AG04449 (cell line): ENCODE measurements at regions of chr12 and their contacts with region 1.

Region 1: DNA sequence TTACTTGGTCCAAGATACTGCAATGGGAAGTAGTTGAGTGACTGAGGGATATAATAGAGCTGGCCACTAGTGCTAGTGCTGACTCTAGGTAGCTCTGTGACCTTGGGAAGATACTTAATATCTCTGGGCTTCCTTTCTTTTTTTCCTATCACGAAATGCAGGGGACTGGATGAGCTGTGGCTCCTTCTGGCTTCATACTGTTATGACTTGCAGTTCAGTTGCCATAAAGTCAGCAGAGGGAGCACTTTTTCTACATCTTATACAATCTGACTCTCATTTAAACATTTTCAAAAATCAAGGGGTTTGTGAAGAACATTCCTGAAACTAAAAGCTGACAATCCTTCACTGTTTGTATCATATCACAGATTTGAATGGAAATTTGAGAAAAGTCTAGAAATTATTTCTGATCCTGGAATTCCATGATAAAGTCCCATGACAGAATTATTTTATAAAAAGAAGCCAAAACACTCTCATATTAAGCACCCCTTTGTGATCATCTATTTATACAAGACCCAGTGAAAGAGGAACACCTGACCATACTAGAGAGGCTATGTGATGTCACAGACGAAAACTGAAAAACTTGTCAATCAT is 5.4 kb downstream of the BHLHE41 start:
- DNase-seq: peak; percentile 33
- H3K4me3 ChIP-seq: no peak overlapping the region
- CTCF ChIP-seq: peak; percentile 58

Region 2: DNA sequence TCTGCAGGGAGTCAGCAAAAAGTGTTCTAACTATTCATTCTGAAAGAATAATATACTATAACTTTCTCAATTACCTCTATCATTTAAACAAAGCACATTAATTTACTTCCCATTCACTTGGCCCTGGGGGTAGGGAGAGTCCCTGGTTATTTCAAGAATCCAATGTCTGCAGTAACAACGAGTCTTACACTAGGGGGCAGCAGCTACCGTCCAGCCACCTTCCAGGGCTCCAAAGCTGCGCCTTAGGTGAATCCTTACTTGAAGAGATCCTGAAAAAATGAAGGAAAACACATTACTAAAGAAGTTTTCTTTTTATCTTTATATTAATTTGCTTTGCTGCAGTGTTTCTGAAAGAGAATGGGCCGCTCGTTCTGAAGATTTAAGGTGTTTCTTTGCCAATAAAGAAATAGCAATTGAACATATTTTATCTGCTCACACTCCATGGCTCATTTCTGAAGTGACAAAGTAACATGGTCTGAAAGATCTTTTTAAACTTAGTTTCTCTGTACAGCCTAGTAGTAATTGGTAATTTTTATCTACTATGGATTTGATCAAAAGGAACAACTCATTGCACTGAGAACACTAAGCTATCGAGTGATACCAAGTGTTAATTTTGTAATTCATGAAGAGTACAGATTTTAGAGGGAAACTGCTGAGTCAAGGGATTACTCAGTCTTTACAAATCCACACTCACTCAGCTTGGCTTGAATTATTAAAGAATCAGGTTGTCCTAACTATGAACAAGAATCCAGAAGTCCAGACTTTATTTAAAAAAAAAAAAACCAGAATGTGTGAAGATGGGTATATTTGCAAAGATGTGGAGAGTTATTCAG is 22.2 kb before region 1 on chr12:
- CTCF ChIA-PET with region 1: interaction called, 13 read pairs
- POLR2A ChIA-PET with region 1: interaction called, 4 read pairs
- DNase-seq: no peak
- H3K4me3 ChIP-seq: no peak overlapping the region
- CTCF ChIP-seq: peak; percentile 86

Region 3: DNA sequence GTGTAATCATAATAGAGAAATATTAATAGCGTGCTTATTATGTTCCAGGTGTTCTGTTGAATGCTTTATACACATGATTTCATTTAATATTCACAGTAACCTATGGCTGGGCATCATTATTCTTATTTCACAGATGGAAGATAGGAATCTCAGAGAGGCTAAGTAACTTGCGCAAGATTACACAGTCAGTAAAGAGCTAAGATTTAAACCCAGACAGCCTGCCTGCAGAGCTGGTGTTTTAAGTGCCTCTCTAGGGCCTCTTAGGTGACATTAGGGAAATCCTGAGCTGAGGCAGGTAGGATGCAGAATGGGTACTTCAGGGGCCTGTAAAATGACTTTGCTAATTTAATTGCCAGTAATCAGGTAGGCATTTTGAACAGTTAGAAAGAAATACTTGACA is 23.8 kb after region 1 on chr12:
- CTCF ChIA-PET with region 1: interaction called, 13 read pairs
- POLR2A ChIA-PET with region 1: no interaction called
- DNase-seq: no peak
- H3K4me3 ChIP-seq: no peak overlapping the region
- CTCF ChIP-seq: no peak

Region 4: GRCh38 chr12:26153421-26154154 is 34.1 kb after region 1 on chr12:
- CTCF ChIA-PET with region 1: interaction called, 11 read pairs
- POLR2A ChIA-PET with region 1: interaction called, 3 read pairs
- DNase-seq: peak; percentile 88
- H3K4me3 ChIP-seq: no peak overlapping the region
- CTCF ChIP-seq: peak; percentile 16

Region 5: DNA sequence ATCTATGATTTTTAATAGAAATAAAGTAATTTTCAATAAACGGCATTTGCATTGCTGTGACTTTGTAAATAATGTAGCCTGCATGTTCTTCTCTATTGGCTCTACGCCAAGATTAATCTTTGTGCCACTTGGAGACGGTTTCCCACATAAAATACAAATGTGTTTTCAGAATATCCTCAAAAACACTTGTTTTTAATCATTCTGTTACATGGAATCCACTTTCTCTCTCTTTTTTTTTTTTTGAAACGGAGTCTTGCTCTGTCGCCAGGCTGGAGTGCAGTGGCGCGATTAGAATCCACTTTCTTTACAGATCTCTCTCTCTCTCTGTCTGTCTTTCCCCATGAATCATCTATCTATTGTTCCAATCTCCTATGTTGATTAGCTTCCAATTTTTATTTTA is 53.1 kb after region 1 on chr12:
- CTCF ChIA-PET with region 1: no interaction called
- POLR2A ChIA-PET with region 1: no interaction called
- DNase-seq: no peak
- H3K4me3 ChIP-seq: no peak overlapping the region
- CTCF ChIP-seq: no peak

Region 6: DNA sequence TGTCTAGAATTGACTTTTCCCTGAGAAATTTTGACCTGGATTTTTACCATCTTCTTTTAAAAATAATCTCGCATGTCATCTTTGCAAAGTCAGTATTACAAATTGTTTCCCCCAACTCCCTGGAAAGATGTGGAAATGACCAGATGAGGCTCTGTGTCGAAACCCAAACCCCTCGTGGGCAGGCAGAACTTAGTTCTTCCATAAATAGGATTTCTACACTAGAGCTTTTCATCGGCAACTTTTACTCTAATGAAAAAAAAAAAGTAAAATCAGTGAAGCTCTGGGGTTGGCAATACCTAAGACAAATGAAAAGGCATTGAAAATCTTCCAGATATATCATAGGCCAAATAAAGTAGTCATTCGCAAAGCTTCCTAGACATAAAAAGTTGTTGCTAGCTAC is 92.9 kb after region 1 on chr12:
- CTCF ChIA-PET with region 1: no interaction called
- POLR2A ChIA-PET with region 1: no interaction called
- DNase-seq: no peak
- H3K4me3 ChIP-seq: no peak overlapping the region
- CTCF ChIP-seq: no peak

Region 7: GRCh38 chr12:26274441-26275312 is 155.2 kb after region 1 on chr12:
- CTCF ChIA-PET with region 1: interaction called, 23 read pairs
- POLR2A ChIA-PET with region 1: interaction called, 5 read pairs
- DNase-seq: peak; percentile 98
- H3K4me3 ChIP-seq: no peak overlapping the region; the same call in 1 of the 2 replicates
- CTCF ChIP-seq: peak; percentile 17

Region 8: GRCh38 chr12:26434299-26435068 is 315.0 kb after region 1 on chr12:
- CTCF ChIA-PET with region 1: interaction called, 12 read pairs
- POLR2A ChIA-PET with region 1: no interaction called
- DNase-seq: no peak
- H3K4me3 ChIP-seq: no peak overlapping the region
- CTCF ChIP-seq: peak; percentile 73